ENCODE measurements at regions of chr15 and their contacts with region 1.

Region 1: DNA sequence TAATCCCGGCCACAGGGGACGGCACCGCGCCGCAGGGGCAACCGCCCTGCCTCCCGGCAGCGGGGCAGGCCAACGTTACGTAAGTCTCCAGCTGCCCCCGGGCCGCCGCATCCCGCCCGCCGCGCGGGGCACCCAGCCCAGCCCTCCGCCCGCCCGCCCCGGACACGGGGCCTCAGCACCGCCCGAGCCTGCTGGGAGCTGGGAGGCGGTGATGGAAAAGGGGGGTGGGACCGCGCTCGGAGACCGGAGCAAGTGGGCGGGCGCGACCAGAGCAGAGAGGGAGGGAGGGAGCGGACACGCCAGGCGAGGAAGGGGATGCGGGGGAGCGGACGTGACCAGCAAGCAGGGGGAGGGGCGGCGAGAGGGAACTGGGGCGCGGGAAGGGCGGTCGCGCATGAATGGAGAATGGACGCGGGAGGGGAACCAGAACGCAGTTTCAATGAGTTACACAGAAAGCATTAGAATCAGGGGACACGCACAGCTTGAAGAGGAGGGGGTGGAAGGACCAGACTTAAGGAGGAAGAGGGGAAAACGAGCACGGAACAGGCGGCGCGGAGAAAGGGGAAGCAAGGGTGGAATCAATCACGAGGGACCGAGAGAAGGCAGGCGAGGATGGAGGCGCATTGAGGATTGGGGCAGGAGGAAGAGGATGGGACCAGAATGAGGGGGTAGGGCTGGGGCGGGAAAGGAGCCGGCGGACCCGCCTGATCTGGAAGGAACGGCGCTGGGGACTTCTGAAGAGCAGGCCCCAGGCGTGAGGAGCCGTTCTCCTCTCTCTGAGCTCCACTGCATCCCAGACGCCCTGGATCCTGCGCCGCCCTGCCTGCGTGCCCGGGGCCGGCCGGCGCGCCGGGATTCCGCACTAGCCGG is 559 bp downstream of the PKM start:
- DNase-seq: peak in 28 of 35 experiments; percentile 2 to 60 (median 26)
- ATAC-seq: peak; percentile 0 to 1 (median 0)
- H3K4me3 ChIP-seq: peak overlapping the region; percentile 82 to 96
- H3K4me3 Mint-ChIP-seq: peak overlapping the region; percentile 97 to 100 (median 97)
- H3K27ac ChIP-seq: peak overlapping the region; percentile 79
- H3K27ac Mint-ChIP-seq: peak overlapping the region; percentile 94 to 96
- H3K4me1 ChIP-seq: peaks cover 29 to 61% of the 10 kb centered on the region in 2 experiments
- H3K4me1 Mint-ChIP-seq: peaks cover 53 to 61% (median 59%) of the 10 kb centered on the region in 3 donors
- H3K27me3 ChIP-seq: no peaks in the 10 kb centered on the region
- H3K27me3 Mint-ChIP-seq: no peaks in the 10 kb centered on the region

Region 2: GRCh38 chr15:72199711-72200212 is 30.7 kb before region 1 on chr15:
- CTCF ChIA-PET with region 1: interaction called, 10 to 20 read pairs
- POLR2A ChIA-PET with region 1: interaction called in 1 of 2 experiments, 3 read pairs
- DNase-seq: peak; percentile 41 to 86 (median 66)
- ATAC-seq: peak; percentile 61 to 79 (median 74)
- H3K4me3 ChIP-seq: no peak overlapping the region
- H3K4me3 Mint-ChIP-seq: no peak overlapping the region
- H3K27ac ChIP-seq: no peak overlapping the region
- H3K27ac Mint-ChIP-seq: no peak overlapping the region
- H3K4me1 ChIP-seq: peaks cover 0 to 11% of the 10 kb centered on the region in 2 experiments
- H3K4me1 Mint-ChIP-seq: peaks cover 6 to 11% (median 9%) of the 10 kb centered on the region in 3 donors
- H3K27me3 ChIP-seq: peaks cover 0 to 33% of the 10 kb centered on the region in 2 experiments
- H3K27me3 Mint-ChIP-seq: peaks cover 11 to 22% of the 10 kb centered on the region in 2 donors

Region 3: GRCh38 chr15:72685925-72686794 is 455.7 kb after region 1 on chr15 and contains the starts of genes BBS4 and HIGD2B:
- CTCF ChIA-PET with region 1: interaction called, 3 read pairs
- POLR2A ChIA-PET with region 1: interaction called in 1 of 2 experiments, 10 read pairs
- DNase-seq: peak; percentile 68 to 90 (median 80)
- ATAC-seq: peak; percentile 95 to 98 (median 98)
- H3K4me3 ChIP-seq: peak within 1 kb of the TSS; percentile 88 to 96
- H3K4me3 Mint-ChIP-seq: peak within 1 kb of the TSS; percentile 96 to 98 (median 98)
- H3K27ac ChIP-seq: peak within 1 kb of the TSS; percentile 89
- H3K27ac Mint-ChIP-seq: peak within 1 kb of the TSS; percentile 92 to 93
- H3K4me1 ChIP-seq: peaks cover 0 to 14% of the 10 kb centered on the region in 2 experiments
- H3K4me1 Mint-ChIP-seq: peaks cover 14 to 24% (median 19%) of the 10 kb centered on the region in 3 donors
- H3K27me3 ChIP-seq: no peaks in the 10 kb centered on the region
- H3K27me3 Mint-ChIP-seq: no peaks in the 10 kb centered on the region
- total RNA-seq, gene BBS4: 16.1 to 19.7 (median 16.6) TPM
- total RNA-seq, gene HIGD2B: 0.33 to 0.45 TPM in 2 of 5 donors, not detected in the others

Measured in T-cell (primary cell).